ENCODE measurements at regions of chr10 and their contacts with region 1.

Region 1: DNA sequence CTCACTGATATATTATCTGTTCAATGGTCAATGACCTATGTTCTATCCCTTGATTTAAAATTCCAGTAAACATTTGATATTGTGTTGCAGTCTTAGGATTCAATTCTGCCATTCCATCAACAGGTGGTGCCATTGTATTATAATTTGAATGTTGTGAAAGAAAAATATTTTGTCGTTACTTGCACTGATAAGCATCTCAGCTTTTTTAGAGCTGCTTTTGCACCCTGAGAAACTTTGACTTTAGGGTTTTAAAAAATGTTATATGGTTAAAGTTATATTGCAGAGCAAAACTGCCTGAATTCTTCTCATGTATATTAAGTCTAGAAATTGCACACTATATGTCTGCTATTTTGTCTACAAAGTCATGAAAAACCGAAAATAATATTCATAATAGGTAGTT is 18.8 kb upstream of the MINDY3 start:
- DNase-seq: no peak
- H3K4me3 Mint-ChIP-seq: no peak overlapping the region
- H3K27ac Mint-ChIP-seq: no peak overlapping the region
- H3K4me1 Mint-ChIP-seq: no peaks in the 10 kb centered on the region
- H3K27me3 Mint-ChIP-seq: peaks cover 61% of the 10 kb centered on the region
- CTCF ChIP-seq: peak; percentile 35

Region 2: DNA sequence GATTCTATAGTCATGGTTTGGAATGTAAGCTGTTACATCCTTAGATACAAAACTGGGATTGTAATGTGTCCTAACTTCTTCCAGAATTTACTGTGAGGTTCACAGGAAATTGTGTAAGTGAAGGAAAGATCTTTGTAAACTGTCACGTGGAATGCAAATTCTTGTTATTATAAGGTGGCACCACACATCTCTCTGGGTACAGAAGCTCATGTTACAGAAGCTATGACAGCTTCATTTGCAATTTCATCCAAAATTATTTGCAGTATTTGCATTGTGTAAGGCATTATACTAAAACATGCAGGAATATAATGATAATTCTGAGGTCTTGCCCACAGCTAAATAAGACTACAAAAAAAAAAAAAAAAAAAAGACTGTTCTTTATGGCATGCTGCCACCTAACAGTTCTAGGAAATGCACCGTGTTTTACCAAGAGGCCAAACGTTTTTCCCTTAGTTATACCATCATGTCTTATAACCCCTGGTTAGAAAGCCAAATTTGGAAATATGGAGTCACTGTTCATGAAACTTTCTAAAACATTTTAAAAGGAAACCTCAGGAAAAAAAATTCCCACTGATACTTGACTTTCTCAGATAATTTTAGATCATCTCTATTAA is 36.4 kb before region 1 on chr10:
- CTCF ChIA-PET with region 1: no interaction called
- intact Hi-C with region 1: no loop called
- DNase-seq: no peak
- H3K4me3 Mint-ChIP-seq: no peak overlapping the region
- H3K27ac Mint-ChIP-seq: no peak overlapping the region
- H3K4me1 Mint-ChIP-seq: no peaks in the 10 kb centered on the region
- H3K27me3 Mint-ChIP-seq: no peaks in the 10 kb centered on the region
- CTCF ChIP-seq: no peak

Region 3: GRCh38 chr10:16809074-16809718 is 930.1 kb after region 1 on chr10:
- CTCF ChIA-PET with region 1: no interaction called
- intact Hi-C with region 1: loop called (anchors 1 kb)
- DNase-seq: peak; percentile 55
- H3K4me3 Mint-ChIP-seq: no peak overlapping the region
- H3K27ac Mint-ChIP-seq: no peak overlapping the region
- H3K4me1 Mint-ChIP-seq: no peaks in the 10 kb centered on the region
- H3K27me3 Mint-ChIP-seq: no peaks in the 10 kb centered on the region
- CTCF ChIP-seq: peak; percentile 54